A549 (cell line): ENCODE measurements at regions of chr12 and their contacts with region 1.

Region 1: DNA sequence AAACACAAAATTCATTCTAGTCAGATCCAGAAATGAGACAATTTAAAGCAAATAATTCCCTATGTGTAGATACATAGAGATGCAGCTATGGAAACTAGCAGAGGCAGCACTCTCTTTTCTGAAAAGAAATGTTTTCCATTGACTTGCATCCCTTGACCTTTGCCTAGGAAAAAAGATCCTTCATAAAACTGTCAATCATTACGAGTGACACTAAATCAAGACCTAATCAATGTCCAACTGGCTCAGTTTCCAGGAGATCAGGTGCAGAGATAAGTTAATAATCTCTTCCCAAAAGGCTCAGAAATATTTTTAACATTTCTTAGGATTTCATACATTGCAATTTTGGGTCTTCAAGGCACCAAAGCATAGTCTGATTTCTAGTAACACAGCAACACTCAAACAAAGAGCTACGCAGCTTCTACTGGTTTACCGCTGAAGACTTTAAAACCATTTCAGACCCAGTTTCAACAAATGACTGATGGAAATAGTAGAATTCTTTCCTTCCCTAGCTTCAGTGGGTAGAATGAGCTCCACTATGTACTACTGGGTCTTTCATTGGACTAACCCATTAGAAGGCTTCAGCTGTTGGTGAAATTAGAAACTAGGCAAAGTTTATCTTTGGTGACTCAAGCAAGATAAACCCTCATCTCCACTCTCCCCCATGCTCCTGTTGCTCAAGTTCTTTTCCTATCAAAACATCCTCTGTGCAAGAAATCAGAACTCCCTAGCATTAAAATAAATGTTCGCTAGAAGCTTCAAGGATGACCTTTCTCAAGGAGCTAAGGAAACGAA is 159.4 kb downstream of the PAWR start:
- DNase-seq: peak in 1 of 2 experiments; percentile 41
- ATAC-seq: peak in 1 of 2 experiments; percentile 64; a peak in 3 of 6 replicates
- H3K4me3 ChIP-seq: no peak overlapping the region
- H3K27ac ChIP-seq: peak overlapping the region in 1 of 2 experiments; percentile 51; a peak in 4 of 6 replicates
- H3K4me1 ChIP-seq: peaks cover 54% of the 10 kb centered on the region
- CTCF ChIP-seq: no peak
- EP300 ChIP-seq: no peak
- POLR2A ChIP-seq: no peak
- RAD21 ChIP-seq: no peak

Region 2: GRCh38 chr12:79512053-79512452 is 19.3 kb before region 1 on chr12:
- CTCF ChIA-PET with region 1: no interaction called
- POLR2A ChIA-PET with region 1: no interaction called
- DNase-seq: peak in 1 of 2 experiments; percentile 34
- ATAC-seq: peak in 1 of 2 experiments; percentile 62; a peak in 3 of 6 replicates
- H3K4me3 ChIP-seq: no peak overlapping the region
- H3K27ac ChIP-seq: 0 out of 6 replicates have a peak overlapping the region, but pooled peaks of 1 of the 2 experiments have one; percentile 30
- H3K4me1 ChIP-seq: no peaks in the 10 kb centered on the region
- CTCF ChIP-seq: peak; percentile 21; the same call in 2 of the 3 replicates
- EP300 ChIP-seq: no peak
- POLR2A ChIP-seq: no peak
- RAD21 ChIP-seq: peak in 1 of 2 experiments; percentile 23; a peak in 1 of 5 replicates

Region 3: GRCh38 chr12:79547735-79548609 is 16.7 kb after region 1 on chr12:
- CTCF ChIA-PET with region 1: interaction called, 11 read pairs
- POLR2A ChIA-PET with region 1: no interaction called
- DNase-seq: peak; percentile 66 to 84
- ATAC-seq: peak; percentile 75; a peak in 5 of 6 replicates
- H3K4me3 ChIP-seq: 0 out of 3 replicates have a peak overlapping the region, but pooled peaks have one; percentile 10
- H3K27ac ChIP-seq: peak overlapping the region; percentile 83 to 88
- H3K4me1 ChIP-seq: peaks cover 56% of the 10 kb centered on the region
- CTCF ChIP-seq: peak; percentile 82
- EP300 ChIP-seq: no peak
- POLR2A ChIP-seq: no peak
- RAD21 ChIP-seq: peak; percentile 72 to 73

Region 4: DNA sequence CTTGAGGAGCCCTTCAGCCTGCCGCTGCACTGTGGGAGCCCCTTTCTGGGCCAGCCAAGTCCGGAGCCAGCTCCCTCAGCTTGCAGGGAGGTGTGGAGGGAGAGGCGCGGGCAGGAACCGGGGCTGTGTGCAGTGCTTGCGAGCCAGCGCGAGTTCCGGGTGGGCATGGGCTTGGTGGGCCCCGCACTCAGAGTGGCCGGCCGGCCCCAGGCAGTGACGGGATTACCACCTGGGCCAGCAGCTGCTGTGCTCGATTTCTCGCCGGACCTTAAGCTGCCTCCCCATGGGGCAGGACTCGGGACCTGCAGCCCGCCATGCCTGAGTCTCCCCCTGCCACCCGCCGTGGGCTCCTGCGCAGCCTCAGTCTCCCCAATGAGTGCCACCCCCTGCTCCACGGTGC is 42.5 kb after region 1 on chr12:
- CTCF ChIA-PET with region 1: no interaction called
- POLR2A ChIA-PET with region 1: no interaction called
- DNase-seq: no peak
- ATAC-seq: no peak
- H3K4me3 ChIP-seq: no peak overlapping the region
- H3K27ac ChIP-seq: no peak overlapping the region
- H3K4me1 ChIP-seq: no peaks in the 10 kb centered on the region
- CTCF ChIP-seq: no peak
- EP300 ChIP-seq: no peak
- POLR2A ChIP-seq: no peak
- RAD21 ChIP-seq: no peak